ENCODE measurements at regions of chr6 and their contacts with region 1.

Region 1: GRCh38 chr6:89034586-89035251 is 45.8 kb upstream of the PNRC1 start:
- DNase-seq: peak in 1 of 3 donors; percentile 32
- ATAC-seq: peak; percentile 15
- H3K4me3 ChIP-seq: no peak overlapping the region
- H3K4me1 ChIP-seq: peaks cover 23% of the 10 kb centered on the region
- CTCF ChIP-seq: no peak

Region 2: GRCh38 chr6:89080542-89081422 is 46.1 kb after region 1 on chr6 and contains the start of gene PNRC1:
- intact Hi-C with region 1: loop called in 1 of 2 experiments (anchors 5 kb)
- DNase-seq: peak; percentile 100
- ATAC-seq: peak; percentile 92
- H3K4me3 ChIP-seq: peak within 1 kb of the TSS; percentile 100
- H3K4me1 ChIP-seq: peaks cover 8% of the 10 kb centered on the region
- CTCF ChIP-seq: no peak
- total RNA-seq, gene PNRC1: 99.9 to 261 (median 102) TPM

Region 3: GRCh38 chr6:89242574-89243330 is 208.0 kb after region 1 on chr6:
- intact Hi-C with region 1: no loop called
- DNase-seq: no peak
- ATAC-seq: peak; percentile 63
- H3K4me3 ChIP-seq: no peak overlapping the region
- H3K4me1 ChIP-seq: no peaks in the 10 kb centered on the region
- CTCF ChIP-seq: no peak

Region 4: GRCh38 chr6:89260310-89260709 is 225.6 kb after region 1 on chr6:
- intact Hi-C with region 1: no loop called
- DNase-seq: no peak
- ATAC-seq: no peak
- H3K4me3 ChIP-seq: no peak overlapping the region
- H3K4me1 ChIP-seq: no peaks in the 10 kb centered on the region
- CTCF ChIP-seq: no peak

Region 5: GRCh38 chr6:89475634-89476033 is 440.9 kb after region 1 on chr6:
- intact Hi-C with region 1: no loop called
- DNase-seq: peak in 1 of 3 donors; percentile 5
- ATAC-seq: peak; percentile 38
- H3K4me3 ChIP-seq: no peak overlapping the region
- H3K4me1 ChIP-seq: no peaks in the 10 kb centered on the region
- CTCF ChIP-seq: no peak

Measured in mucosa of descending colon (tissue), 3 donors.